ENCODE measurements at regions of chr19 and their contacts with region 1.

Region 1: GRCh38 chr19:40190891-40191835 is at the start of gene MAP3K10:
- DNase-seq: peak; percentile 41 to 86 (median 70)
- ATAC-seq: peak; percentile 79
- H3K4me3 ChIP-seq: peak within 1 kb of the TSS; percentile 82 to 100
- H3K4me3 Mint-ChIP-seq: peak within 1 kb of the TSS; percentile 91
- H3K27ac ChIP-seq: peak within 1 kb of the TSS; percentile 81 to 90
- H3K27ac Mint-ChIP-seq: peak within 1 kb of the TSS; percentile 91
- H3K4me1 ChIP-seq: peaks cover 16% of the 10 kb centered on the region
- H3K4me1 Mint-ChIP-seq: peaks cover 34% of the 10 kb centered on the region
- H3K27me3 ChIP-seq: no peaks in the 10 kb centered on the region
- H3K27me3 Mint-ChIP-seq: no peaks in the 10 kb centered on the region
- CTCF ChIP-seq: no peak
- total RNA-seq, gene MAP3K10: 26.4 to 27.7 TPM

Region 2: DNA sequence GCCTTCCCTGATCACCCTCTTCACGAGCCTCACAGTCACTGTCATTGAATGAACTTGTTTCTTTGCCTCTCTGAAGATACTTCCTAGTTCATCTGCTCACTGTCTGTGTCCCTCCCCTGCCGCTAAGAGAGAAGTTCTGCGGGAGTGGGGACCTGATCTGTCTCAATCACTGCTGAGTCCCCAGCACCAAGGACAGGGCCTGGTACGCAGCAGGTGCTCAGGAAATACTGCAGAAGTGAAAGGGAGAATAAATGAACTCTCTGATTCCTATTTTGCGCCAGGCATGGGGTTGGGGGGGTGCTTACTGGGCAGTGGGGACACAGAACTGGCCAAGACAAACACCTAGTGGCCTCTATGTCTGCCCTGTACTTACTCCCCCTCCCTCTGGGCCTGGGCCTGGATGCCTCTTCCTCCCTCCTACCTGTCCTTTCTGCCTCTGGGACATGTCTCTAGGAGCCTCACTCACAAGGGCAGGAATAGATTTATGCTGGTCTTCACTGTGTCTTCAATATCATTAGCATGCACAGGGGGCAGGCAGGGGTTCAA is 274.2 kb before region 1 on chr19:
- CTCF ChIA-PET with region 1: no interaction called
- POLR2A ChIA-PET with region 1: no interaction called
- intact Hi-C with region 1: no loop called
- DNase-seq: no peak
- ATAC-seq: no peak
- H3K4me3 ChIP-seq: no peak overlapping the region
- H3K4me3 Mint-ChIP-seq: no peak overlapping the region
- H3K27ac ChIP-seq: no peak overlapping the region
- H3K27ac Mint-ChIP-seq: no peak overlapping the region
- H3K4me1 ChIP-seq: no peaks in the 10 kb centered on the region
- H3K4me1 Mint-ChIP-seq: peaks cover 19% of the 10 kb centered on the region
- H3K27me3 ChIP-seq: no peaks in the 10 kb centered on the region
- H3K27me3 Mint-ChIP-seq: no peaks in the 10 kb centered on the region
- CTCF ChIP-seq: no peak

Region 3: DNA sequence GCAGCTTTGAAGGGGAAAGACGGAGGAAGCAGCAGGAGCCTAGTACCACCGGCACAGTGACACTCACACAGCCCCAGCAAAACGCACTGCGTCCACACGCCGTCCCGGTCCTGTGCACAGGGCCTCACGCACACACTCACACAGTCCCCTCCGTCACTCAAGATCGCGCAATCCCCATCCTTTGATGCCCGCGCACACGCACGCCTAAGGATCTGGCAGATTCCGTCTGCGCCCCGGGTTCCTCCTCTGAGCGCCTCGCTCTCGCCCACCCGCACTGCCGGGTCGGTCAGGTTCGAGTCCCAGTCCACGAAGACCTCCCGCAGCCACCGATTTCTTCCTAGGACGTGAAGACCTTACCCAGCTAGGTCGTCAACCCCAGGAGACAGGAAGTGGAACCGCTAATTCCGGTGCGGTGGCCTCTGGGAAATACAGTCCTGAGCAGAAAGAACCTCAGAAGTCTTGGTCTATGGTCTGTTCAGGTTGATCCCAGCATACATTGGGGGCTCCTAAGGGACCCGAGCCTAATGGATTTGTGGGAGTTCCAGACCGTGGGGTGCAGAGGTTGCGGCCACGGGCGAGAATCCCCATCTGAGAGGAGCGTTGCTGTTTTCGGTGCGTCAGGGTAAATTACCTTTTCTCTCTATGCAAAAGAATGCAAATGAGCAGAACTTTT is 135.2 kb before region 1 on chr19 and contains the start of gene ZNF780B:
- CTCF ChIA-PET with region 1: no interaction called
- POLR2A ChIA-PET with region 1: no interaction called
- intact Hi-C with region 1: loop called in 1 of 2 experiments (anchors 2 kb)
- DNase-seq: peak; percentile 29 to 82 (median 69)
- ATAC-seq: peak; percentile 90
- H3K4me3 ChIP-seq: peak within 1 kb of the TSS; percentile 72 to 83
- H3K4me3 Mint-ChIP-seq: peak within 1 kb of the TSS; percentile 100
- H3K27ac ChIP-seq: peak within 1 kb of the TSS; percentile 78
- H3K27ac Mint-ChIP-seq: peak within 1 kb of the TSS; percentile 99
- H3K4me1 ChIP-seq: peaks cover 21% of the 10 kb centered on the region
- H3K4me1 Mint-ChIP-seq: peaks cover 58% of the 10 kb centered on the region
- H3K27me3 ChIP-seq: no peaks in the 10 kb centered on the region
- H3K27me3 Mint-ChIP-seq: peaks cover 8% of the 10 kb centered on the region
- CTCF ChIP-seq: no peak
- total RNA-seq, gene ZNF780B: 9.8 to 14.8 TPM

Region 4: GRCh38 chr19:40090241-40091204 is 100.6 kb before region 1 on chr19 and contains the start of gene ZNF780A:
- CTCF ChIA-PET with region 1: no interaction called
- POLR2A ChIA-PET with region 1: no interaction called
- intact Hi-C with region 1: loop called in 1 of 2 experiments (anchors 1 kb)
- DNase-seq: peak; percentile 55 to 87 (median 79)
- ATAC-seq: peak; percentile 94
- H3K4me3 ChIP-seq: peak within 1 kb of the TSS; percentile 83 to 99
- H3K4me3 Mint-ChIP-seq: peak within 1 kb of the TSS; percentile 100
- H3K27ac ChIP-seq: peak within 1 kb of the TSS; percentile 93 to 98
- H3K27ac Mint-ChIP-seq: peak within 1 kb of the TSS; percentile 100
- H3K4me1 ChIP-seq: peaks cover 24% of the 10 kb centered on the region
- H3K4me1 Mint-ChIP-seq: peaks cover 48% of the 10 kb centered on the region
- H3K27me3 ChIP-seq: peaks cover 0 to 4% of the 10 kb centered on the region in 2 experiments
- H3K27me3 Mint-ChIP-seq: peaks cover 7% of the 10 kb centered on the region
- CTCF ChIP-seq: no peak
- total RNA-seq, gene ZNF780A: 10.6 to 11.6 TPM

Region 5: DNA sequence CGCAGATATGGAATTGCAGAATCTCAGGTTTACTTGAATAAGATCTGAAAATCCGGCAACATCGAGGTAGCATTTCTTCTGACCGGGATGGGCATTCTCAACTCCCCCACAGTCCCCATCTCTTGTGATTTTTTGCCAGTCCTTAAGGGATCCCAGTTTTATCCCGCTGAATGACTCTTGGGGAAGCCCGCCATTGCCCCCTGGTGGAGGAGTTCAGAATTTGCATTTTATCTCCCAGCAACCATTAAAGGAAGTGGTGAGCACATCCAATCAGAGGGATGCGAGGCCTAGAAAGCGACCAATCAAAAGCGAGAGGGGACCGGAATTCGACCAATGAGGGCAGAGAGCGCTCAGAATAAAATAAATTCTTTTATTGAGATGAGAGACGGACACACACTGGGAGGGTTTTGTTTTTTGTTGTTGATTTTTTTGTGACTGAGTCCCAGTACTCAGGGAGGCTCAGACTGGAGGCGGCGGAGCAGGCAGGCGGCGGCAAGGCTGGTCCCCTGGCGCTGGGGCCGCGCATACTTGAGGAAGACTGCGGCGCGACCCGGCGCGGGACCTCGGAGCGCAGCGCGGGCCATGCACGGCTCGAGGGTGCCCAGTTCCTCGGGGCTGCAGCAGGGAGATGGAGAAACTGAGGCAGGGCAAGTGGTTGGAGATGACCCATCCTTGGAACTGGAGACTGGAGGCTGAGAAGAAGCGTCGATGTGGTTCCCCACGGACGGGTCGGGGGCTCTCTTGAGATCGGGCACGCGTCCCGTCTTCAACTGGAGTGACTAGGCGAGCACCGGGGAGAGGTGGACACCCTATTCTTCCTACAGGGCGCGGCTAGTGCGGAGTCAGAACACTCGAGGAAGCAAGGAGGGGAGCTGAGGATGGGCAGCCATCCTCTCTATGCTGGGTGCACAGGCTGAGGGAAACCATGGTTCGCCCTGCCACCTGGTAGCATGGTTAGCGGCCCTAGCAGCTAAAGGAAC is 31.0 kb after region 1 on chr19:
- CTCF ChIA-PET with region 1: no interaction called
- POLR2A ChIA-PET with region 1: no interaction called
- intact Hi-C with region 1: loop called (anchors 1 to 2 kb)
- DNase-seq: peak; percentile 47 to 91 (median 76)
- ATAC-seq: peak; percentile 77
- H3K4me3 ChIP-seq: no peak overlapping the region
- H3K4me3 Mint-ChIP-seq: no peak overlapping the region
- H3K27ac ChIP-seq: no peak overlapping the region
- H3K27ac Mint-ChIP-seq: no peak overlapping the region
- H3K4me1 ChIP-seq: peaks cover 21% of the 10 kb centered on the region
- H3K4me1 Mint-ChIP-seq: peaks cover 16% of the 10 kb centered on the region
- H3K27me3 ChIP-seq: peaks cover 39 to 42% of the 10 kb centered on the region in 2 experiments
- H3K27me3 Mint-ChIP-seq: peaks cover 49% of the 10 kb centered on the region
- CTCF ChIP-seq: peak; percentile 88

Measured in CD8-positive, alpha-beta T cell (primary cell).